Endothelial cell of umbilical vein (primary cell): ENCODE measurements at regions of chr18 and their contacts with region 1.

Region 1: DNA sequence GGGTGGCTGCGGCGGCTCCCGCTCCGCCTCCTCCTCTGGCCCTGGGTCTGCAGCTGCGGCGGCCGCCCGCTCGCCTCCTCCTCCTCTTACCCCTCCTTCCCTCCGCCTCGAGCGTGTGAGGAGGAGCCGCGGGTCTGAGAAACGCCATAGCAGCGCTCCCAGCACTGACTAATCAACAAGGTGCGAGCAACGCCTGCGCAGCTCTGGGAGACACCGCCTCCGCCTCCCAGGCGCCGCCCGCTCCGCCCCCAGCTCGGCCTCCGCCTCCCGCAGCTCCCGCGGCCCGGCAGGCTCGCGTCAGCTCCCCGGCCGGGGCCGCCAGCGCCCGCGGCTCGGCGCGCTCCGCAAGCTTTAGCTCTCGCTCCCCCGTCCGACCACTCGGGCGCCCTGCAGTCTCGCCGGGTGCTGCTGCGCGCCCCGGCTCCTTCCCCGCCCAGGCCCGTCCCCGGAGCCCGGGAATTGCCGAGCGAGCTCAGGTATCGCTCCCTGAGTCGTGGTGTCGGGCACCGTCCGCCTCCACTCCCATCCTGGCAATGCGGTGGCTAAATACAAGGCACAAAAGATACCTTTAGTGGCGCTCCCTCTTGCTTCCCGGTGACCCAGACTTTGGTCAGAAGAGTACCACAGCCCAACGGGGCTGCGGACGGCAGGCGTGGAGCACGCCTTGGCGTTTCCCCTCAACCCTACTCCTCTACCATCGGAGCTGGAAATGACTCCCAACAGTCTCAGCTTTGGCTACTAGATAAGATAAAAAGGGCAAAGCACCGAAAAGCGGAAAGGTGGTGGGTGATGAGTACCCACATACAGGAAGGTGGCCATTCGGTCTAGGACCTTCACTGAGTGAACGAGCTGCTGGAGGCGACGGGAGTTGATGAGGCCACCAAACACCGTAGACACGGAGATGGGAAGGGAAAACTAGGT is at the start of gene GAREM1:
- DNase-seq: peak; percentile 98
- H3K4me3 ChIP-seq: peak within 1 kb of the TSS; percentile 34 to 55 (median 45)
- H3K27ac ChIP-seq: peak within 1 kb of the TSS; percentile 9
- H3K4me1 ChIP-seq: peaks cover 13% of the 10 kb centered on the region
- H3K27me3 ChIP-seq: peaks cover 18 to 22% of the 10 kb centered on the region in 2 experiments
- CTCF ChIP-seq: peak; percentile 61 to 69
- POLR2A ChIP-seq: no peak
- total RNA-seq, gene GAREM1: 1.0 and 1.1 TPM in 2 replicates

Region 2: DNA sequence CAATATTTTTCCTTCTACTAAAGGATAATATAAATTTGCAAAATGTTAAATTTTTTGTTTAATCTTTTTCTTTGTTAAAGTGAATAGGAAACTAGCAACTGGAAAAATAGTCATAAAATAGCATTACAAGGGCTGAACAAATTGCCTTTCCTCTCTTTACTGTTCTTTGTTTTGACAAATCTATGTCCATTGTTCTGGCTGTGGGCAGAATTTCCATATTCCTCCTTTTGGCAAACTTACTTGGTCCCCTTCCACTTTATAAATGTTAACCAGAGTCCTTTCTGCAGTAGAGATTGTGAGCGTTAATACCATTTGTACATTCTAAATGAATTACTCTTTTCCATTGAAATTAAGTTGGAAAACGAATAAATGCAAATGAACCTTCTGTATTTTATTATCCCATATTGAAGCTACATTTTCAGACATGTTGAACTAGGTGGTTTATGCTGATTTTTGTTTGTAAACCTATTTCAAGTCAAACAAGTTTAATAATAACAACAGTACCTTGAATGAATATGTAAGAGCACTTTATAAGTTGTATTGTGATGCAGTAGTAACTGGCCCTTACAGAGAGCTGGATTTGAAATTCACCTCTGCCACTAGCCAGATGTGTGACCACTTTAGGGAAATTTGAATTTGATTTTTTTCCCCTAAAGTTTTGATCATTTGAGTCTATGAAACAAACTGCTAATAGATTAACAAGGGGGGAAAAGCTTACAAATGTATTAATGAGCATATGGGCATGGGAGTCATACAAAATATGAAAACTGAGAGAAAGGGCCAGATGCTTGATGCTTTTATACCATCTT is 449.0 kb before region 1 on chr18:
- CTCF ChIA-PET with region 1: no interaction called
- POLR2A ChIA-PET with region 1: no interaction called
- dilution Hi-C with region 1: no loop called
- intact Hi-C with region 1: no loop called
- DNase-seq: peak; percentile 11
- H3K4me3 ChIP-seq: no peak overlapping the region
- H3K27ac ChIP-seq: no peak overlapping the region
- H3K4me1 ChIP-seq: peaks cover 11% of the 10 kb centered on the region
- H3K27me3 ChIP-seq: no peaks in the 10 kb centered on the region
- CTCF ChIP-seq: no peak
- POLR2A ChIP-seq: no peak

Region 3: DNA sequence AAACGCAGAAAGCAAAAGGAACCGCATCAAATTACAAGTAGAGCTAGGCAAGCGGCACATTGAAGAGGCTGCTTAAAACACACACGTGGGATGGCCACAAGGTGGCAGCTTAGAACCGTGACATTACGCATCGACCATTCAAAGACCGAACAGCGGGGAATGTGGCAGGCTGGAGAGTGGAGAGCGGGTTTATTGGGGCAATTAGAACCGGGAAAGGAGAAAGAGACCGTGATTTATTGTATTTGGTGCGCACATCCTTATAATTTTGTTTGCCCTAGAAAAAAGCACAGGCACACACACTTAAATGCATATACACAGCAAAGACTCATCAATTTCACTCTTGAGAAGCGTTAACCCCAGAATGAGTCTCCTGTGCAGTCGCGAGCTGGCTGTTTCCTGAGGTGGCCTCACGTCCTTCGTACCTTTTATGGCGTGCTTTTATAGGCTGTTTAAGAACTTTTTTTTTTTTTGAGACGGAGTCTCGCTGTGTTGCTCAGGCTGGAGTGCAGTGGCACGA is 312.8 kb before region 1 on chr18:
- CTCF ChIA-PET with region 1: interaction called, 47 read pairs
- POLR2A ChIA-PET with region 1: no interaction called
- dilution Hi-C with region 1: no loop called
- intact Hi-C with region 1: loop called (anchors 2 kb)
- DNase-seq: peak; percentile 83
- H3K4me3 ChIP-seq: no peak overlapping the region
- H3K27ac ChIP-seq: no peak overlapping the region
- H3K4me1 ChIP-seq: no peaks in the 10 kb centered on the region
- H3K27me3 ChIP-seq: peaks cover 0 to 4% of the 10 kb centered on the region in 2 experiments
- CTCF ChIP-seq: peak; percentile 78 to 85
- POLR2A ChIP-seq: no peak

Region 4: GRCh38 chr18:32276906-32277305 is 194.1 kb before region 1 on chr18:
- CTCF ChIA-PET with region 1: interaction called, 142 read pairs
- POLR2A ChIA-PET with region 1: no interaction called
- dilution Hi-C with region 1: no loop called
- intact Hi-C with region 1: no loop called
- DNase-seq: no peak
- H3K4me3 ChIP-seq: no peak overlapping the region
- H3K27ac ChIP-seq: no peak overlapping the region
- H3K4me1 ChIP-seq: no peaks in the 10 kb centered on the region
- H3K27me3 ChIP-seq: peaks cover 1 to 2% of the 10 kb centered on the region in 2 experiments
- CTCF ChIP-seq: no peak
- POLR2A ChIP-seq: no peak

Region 5: GRCh38 chr18:32295604-32296003 is 175.4 kb before region 1 on chr18:
- CTCF ChIA-PET with region 1: interaction called, 295 read pairs
- POLR2A ChIA-PET with region 1: no interaction called
- dilution Hi-C with region 1: no loop called
- intact Hi-C with region 1: no loop called
- DNase-seq: no peak
- H3K4me3 ChIP-seq: no peak overlapping the region
- H3K27ac ChIP-seq: no peak overlapping the region
- H3K4me1 ChIP-seq: no peaks in the 10 kb centered on the region
- H3K27me3 ChIP-seq: peaks cover 8 to 19% of the 10 kb centered on the region in 2 experiments
- CTCF ChIP-seq: no peak
- POLR2A ChIP-seq: no peak

Region 6: DNA sequence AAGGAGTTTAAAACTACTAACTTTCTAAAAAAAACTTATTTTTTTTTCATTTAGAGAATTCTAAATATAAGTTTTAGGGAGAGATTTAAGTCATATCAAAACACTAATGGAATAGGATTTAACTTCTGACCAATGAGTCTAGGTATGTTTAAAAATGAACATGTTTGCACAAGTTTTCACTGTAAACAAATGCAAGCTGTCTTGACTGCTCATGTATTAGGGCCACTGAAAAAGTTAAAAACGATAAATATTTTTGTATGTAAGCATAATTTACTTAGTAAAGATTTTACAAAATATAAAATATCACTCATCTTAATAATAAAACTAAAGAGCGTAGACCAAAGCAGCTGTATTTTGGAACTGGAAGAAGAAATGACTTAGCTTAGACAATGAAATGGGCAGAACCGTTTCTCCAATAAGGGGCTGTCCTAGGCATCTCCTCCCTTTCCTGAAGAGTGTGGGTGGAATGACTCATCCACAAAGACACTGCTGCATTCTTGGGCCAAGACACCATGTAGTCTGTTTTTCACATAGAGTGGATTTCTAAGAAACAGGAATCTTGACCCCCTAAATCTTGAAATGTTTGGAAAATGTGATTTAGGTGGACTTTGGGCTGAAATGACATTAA is 162.4 kb before region 1 on chr18:
- CTCF ChIA-PET with region 1: interaction called, 20 read pairs
- POLR2A ChIA-PET with region 1: no interaction called
- dilution Hi-C with region 1: no loop called
- intact Hi-C with region 1: no loop called
- DNase-seq: peak; percentile 81
- H3K4me3 ChIP-seq: no peak overlapping the region
- H3K27ac ChIP-seq: no peak overlapping the region
- H3K4me1 ChIP-seq: peaks cover 7% of the 10 kb centered on the region
- H3K27me3 ChIP-seq: peaks cover 0 to 2% of the 10 kb centered on the region in 2 experiments
- CTCF ChIP-seq: no peak
- POLR2A ChIP-seq: no peak

Region 7: GRCh38 chr18:32383050-32383819 is 87.7 kb before region 1 on chr18:
- CTCF ChIA-PET with region 1: interaction called, 14 read pairs
- POLR2A ChIA-PET with region 1: no interaction called
- dilution Hi-C with region 1: no loop called
- intact Hi-C with region 1: loop called (anchors 1 kb)
- DNase-seq: peak; percentile 99
- H3K4me3 ChIP-seq: no peak overlapping the region
- H3K27ac ChIP-seq: peak overlapping the region; percentile 85
- H3K4me1 ChIP-seq: peaks cover 30% of the 10 kb centered on the region
- H3K27me3 ChIP-seq: no peaks in the 10 kb centered on the region
- CTCF ChIP-seq: no peak
- POLR2A ChIP-seq: no peak

Region 8: GRCh38 chr18:32552421-32553030 is 81.6 kb after region 1 on chr18:
- CTCF ChIA-PET with region 1: interaction called, 27 read pairs
- POLR2A ChIA-PET with region 1: no interaction called
- dilution Hi-C with region 1: no loop called
- intact Hi-C with region 1: loop called (anchors 1 kb)
- DNase-seq: peak; percentile 62
- H3K4me3 ChIP-seq: no peak overlapping the region
- H3K27ac ChIP-seq: no peak overlapping the region
- H3K4me1 ChIP-seq: no peaks in the 10 kb centered on the region
- H3K27me3 ChIP-seq: peaks cover 2 to 5% of the 10 kb centered on the region in 2 experiments
- CTCF ChIP-seq: peak; percentile 53 to 77
- POLR2A ChIP-seq: no peak